ENCODE measurements at regions of chr5 and their contacts with region 1.

Region 1: DNA sequence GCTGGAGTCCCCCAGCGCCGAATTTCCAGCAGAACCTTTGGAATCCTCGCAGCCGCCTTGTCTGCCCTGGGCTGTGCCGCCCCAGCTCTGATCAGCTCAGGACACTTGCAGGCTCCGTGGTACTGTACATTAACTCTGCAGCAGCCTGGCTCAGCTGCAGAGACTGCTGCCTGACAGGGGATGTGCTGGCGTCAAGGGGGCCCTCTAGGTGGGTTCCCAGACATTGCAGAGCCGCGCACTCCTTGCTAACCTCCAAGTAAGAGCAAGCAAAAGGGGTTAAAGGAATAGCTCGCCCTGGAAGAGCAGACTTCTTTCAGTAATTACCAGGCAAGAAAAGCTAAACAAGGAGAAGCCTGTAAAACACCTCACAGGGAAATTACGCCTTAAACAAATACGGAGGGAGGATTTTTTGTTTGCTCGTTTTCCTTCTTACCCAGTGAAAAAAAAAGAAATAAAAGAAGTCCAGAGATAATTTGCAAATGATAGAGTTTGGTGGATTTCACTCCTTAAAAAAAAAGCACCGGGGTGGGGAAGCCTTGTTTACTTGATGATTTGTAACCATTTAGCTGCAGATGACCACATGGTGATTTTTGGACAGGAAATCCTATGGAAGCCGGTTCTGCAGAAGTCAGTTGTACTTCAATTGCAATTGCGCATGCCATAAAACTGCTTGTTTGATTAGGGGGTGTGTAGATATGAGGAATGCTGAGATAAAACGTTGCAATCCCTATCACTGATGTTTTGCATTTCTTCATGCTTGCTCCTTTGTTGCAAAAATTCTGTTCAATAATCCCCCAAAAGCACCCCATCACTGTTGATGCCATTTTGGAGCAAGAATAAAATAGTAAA is 305.8 kb downstream of the PDE4D start:
- DNase-seq: peak; percentile 70 to 96 (median 89)

Region 2: GRCh38 chr5:59275510-59276324 is 312.0 kb before region 1 on chr5:
- intact Hi-C with region 1: no loop called
- DNase-seq: peak in 5 of 42 donors; percentile 5 to 23 (median 11)

Region 3: DNA sequence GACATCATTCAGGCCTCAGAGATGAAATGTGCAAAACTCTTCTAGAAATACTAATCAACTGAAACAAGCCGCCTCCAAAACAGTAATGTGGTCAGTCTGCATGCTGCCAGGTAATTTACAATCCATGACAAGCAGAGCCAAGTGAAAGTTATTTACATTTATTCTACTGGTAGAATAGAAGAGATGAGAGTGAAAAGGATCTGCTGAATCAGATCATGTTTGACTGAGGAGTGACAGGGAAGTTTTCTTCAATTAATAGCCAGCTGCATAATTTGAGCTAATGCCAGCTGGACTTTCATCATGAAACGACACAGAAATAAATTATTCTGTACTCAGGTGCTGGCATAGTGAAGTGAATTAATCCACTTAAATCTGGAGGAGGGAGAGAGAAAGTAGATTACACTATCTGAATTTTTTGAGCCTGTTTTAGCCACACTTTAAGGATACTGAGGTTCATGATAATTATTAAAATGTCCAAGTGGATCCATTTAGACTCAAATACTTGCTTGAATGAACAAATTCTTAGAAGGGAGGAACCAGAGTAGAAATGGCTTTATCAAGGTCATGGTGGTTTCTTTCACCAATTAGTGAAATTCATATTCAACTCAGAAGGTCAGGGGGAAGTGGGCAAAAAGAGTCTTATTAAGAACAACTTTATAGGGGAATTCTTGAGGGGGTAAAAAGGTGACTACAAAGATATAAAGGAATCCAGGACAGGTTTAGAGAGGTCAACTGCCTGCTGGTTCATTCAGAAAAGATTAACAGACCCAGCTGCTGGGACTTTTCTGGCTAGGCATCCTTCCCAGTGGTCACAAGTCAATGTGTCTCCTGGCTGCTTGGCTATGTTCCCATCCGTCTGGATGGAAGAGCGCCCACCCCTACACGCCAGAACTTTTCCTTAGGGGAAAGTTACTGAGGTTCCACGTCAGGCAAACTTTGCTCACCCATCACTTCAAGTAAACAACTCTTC is 44.6 kb before region 1 on chr5:
- intact Hi-C with region 1: loop called (anchors 5 kb)
- DNase-seq: peak in 31 of 42 donors; percentile 5 to 69 (median 22)